Uterus (tissue), 4 donors: ENCODE measurements at regions of chr19 and their contacts with region 1.

Region 1: DNA sequence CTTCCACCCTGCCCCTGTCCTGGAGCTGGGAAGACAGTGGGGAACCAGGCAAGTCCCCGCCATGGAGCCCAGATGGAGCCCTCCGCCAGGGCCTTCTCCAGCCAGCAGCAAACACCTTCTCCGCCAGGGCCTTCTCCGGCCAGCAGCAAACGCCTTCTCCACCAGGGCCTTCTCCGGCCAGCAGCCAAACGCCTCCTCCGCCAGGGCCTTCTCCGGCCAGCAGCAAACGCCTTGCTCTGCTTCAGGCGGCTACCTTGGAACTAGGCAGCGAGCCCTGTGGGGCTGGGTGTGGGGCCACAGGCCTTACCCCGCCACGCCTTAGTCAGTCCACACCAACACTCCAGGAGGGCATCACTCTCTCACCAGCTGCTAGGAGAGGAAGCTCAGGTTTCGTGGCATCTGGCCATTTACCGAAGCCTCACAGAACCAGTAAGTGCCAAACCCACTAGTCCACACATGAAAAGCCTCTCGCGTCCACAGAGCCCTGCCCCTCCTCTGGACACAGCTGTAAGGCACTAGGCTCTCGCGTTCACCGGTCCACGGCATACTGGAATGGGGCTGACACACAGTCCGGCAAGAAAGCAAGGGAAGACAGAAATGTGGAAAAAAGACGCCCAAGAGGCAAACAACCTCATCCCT is 41.0 kb downstream of the MLLT1 start:
- DNase-seq: peak; percentile 70 to 78
- H3K4me3 ChIP-seq: peak overlapping the region in 1 of 2 donors; percentile 9
- H3K27ac ChIP-seq: peak overlapping the region; percentile 79 to 90
- H3K4me1 ChIP-seq: peaks cover 7 to 30% of the 10 kb centered on the region in 2 donors
- H3K27me3 ChIP-seq: no peaks in the 10 kb centered on the region
- CTCF ChIP-seq: peak in 3 of 4 experiments; percentile 21 to 29 (median 28)
- POLR2A ChIP-seq: no peak

Region 2: DNA sequence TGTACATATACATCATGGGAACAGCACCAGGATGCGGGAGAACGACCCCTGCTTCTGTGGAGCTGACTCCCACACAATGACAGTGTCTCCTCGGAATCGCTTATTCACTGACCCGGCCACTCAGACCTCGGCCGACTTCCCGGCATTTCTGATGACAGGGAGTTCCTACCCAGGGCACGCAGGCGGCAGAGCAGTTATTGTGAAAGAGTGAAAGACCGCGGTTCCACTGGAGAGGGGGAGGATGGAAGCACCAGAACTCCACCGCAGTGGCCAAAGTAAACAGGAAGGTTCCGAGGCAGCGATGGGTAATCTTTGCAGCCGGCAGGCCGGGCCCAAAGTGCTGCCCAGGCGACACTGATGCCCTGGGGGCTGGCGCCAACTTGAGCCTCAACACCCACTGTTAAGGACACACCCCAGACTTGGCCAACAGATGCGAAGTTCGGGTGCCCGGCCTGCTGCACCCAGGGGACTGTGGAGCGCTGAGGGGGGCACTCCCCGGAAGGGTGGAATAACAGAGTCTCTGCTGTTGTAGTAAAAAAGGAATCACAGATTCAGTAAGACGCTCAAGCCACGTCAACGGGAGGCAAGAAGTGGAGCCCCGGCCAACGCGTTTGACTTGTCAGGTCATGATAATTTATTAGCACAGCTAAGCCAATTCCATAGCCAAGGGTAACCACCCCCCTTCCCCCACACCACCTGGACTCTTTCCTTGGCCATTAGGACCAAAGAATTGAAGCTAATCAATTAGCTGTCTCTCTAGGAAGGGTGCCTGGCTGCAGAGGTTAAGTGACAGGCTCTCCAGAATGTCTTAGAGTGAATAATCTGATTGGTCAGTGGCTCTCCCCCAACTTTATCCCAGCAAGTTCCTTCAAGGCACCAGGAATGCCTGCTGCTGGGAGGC is 35.2 kb after region 1 on chr19:
- intact Hi-C with region 1: loop called (anchors 5 kb)
- DNase-seq: peak; percentile 77 to 82
- H3K4me3 ChIP-seq: peak overlapping the region; percentile 1 to 20
- H3K27ac ChIP-seq: peak overlapping the region; percentile 92 to 93
- H3K4me1 ChIP-seq: peaks cover 30 to 47% of the 10 kb centered on the region in 2 donors
- H3K27me3 ChIP-seq: no peaks in the 10 kb centered on the region
- CTCF ChIP-seq: no peak
- POLR2A ChIP-seq: no peak